Left ventricle myocardium superior (tissue), 1 donor: ENCODE measurements at regions of chr3 and their contacts with region 1.

Region 1: GRCh38 chr3:61927332-61927731 is 366.0 kb downstream of the PTPRG start:
- DNase-seq: peak; percentile 88
- ATAC-seq: peak; percentile 92

Region 2: DNA sequence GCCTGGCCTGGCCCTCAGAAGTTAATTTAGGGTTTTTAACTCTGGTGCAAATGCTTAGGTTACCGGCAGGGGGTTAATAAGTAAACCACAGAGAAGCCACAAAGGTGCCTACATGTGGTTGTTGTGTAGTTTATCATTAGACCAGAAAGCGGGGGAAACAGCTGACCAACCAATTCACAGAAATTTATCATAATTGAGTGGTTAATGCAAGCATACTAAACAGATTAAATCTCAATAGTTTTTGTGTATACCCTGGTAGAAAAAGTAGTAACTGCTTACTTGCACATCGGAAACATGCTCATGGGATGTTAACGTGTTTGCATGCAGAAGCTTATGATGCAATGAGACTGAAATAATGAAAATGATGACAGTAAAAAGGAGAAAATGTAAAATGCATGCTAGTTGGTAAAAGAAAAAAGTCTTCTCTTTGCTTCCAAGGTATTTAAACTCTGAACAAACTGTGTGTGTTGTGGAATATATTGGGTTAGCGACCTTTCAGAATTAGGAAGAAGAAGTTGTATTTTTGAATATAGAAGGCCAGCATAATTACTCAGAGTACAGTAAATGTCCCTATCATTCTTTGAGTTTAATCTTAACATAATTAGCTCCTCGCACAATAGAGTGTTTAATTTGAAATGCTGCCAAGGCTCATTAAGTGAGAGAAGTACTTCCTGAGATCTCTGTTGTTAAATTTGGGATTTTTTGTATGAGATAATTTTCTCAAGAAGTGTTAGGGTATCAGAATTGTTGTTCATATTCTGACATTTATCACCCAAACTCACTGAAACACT is 49.8 kb before region 1 on chr3:
- intact Hi-C with region 1: loop called (anchors 10 kb)
- DNase-seq: no peak
- ATAC-seq: no peak